Activated naive CD4-positive, alpha-beta T cell treated with anti-CD3 and anti-CD28 coated beads for 36 hours (primary cell): ENCODE measurements at regions of chr6 and their contacts with region 1.

Region 1: DNA sequence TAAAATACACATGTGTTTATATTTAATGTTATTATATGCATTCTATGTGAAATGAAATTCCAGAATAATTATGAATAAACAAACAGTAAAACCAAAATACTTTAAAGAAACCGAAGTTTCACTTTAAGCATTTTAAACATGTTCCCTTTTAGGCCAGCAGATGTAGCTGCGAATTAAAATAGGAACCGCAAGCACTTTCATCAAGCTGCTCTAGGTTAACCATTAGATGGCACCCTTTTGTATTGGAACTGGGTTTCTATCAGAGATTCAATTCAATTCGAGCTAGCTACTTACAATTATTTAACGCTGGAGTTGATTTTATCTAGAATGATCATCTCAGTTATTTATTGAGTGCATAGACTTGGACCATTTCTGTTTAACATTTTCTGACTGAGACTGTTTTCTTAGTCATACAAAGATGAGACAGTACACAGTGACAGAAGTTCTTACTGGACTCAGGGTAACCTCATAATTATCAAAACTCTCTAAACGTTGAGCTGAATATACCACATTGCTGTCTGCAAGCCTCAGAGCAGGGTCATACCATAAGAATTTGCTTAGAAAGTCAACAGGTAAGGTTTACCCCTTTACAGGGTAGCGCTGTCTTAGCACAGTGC is 8.5 kb downstream of the TMEM242 start:
- DNase-seq: peak; percentile 30
- H3K4me3 Mint-ChIP-seq: no peak overlapping the region
- H3K27ac Mint-ChIP-seq: no peak overlapping the region
- H3K4me1 Mint-ChIP-seq: peaks cover 12% of the 10 kb centered on the region
- H3K27me3 Mint-ChIP-seq: no peaks in the 10 kb centered on the region

Region 2: GRCh38 chr6:157339432-157339831 is 24.6 kb after region 1 on chr6:
- CTCF ChIA-PET with region 1: interaction called, 39 read pairs
- intact Hi-C with region 1: loop called (anchors 1 kb)
- DNase-seq: no peak
- H3K4me3 Mint-ChIP-seq: no peak overlapping the region
- H3K27ac Mint-ChIP-seq: no peak overlapping the region
- H3K4me1 Mint-ChIP-seq: no peaks in the 10 kb centered on the region
- H3K27me3 Mint-ChIP-seq: peaks cover 41% of the 10 kb centered on the region

Region 3: GRCh38 chr6:157597446-157598312 is 282.9 kb after region 1 on chr6:
- CTCF ChIA-PET with region 1: interaction called, 17 read pairs
- intact Hi-C with region 1: loop called (anchors 1 kb)
- DNase-seq: peak; percentile 69
- H3K4me3 Mint-ChIP-seq: no peak overlapping the region
- H3K27ac Mint-ChIP-seq: no peak overlapping the region
- H3K4me1 Mint-ChIP-seq: no peaks in the 10 kb centered on the region
- H3K27me3 Mint-ChIP-seq: no peaks in the 10 kb centered on the region

Region 4: DNA sequence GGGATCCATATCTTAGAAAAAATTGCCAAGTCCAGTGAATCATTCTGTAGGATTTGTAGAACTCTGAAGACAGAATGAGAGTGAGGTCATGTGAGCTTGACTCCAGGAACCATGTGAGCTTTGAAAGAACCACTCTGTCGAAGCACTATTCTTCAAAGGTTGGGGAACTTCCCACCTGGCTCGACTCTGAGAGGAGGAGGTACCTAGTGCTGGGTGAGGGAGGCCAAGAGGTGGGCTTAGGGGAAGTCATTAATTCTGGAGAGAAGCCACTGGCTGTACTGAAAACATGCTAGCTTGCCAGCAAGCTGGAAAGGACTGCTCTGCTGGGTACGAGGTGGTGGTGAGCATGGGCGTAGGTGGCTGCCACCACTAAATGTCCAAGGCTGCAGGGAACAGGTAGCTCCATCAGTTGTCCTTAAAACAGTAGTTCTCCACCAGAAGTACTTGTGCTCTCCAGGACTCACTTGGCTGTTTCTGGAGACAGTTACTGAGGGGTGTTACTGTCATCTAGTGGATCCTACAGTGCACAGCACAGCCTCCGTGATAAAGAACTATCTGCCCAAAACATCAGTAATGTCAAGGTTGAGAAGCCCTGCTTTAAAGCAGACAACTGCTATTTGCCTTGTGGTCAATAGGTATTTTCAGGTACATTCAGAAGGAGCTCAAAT is 632.2 kb after region 1 on chr6:
- CTCF ChIA-PET with region 1: no interaction called
- intact Hi-C with region 1: loop called (anchors 2 kb)
- DNase-seq: peak; percentile 57
- H3K4me3 Mint-ChIP-seq: no peak overlapping the region
- H3K27ac Mint-ChIP-seq: no peak overlapping the region
- H3K4me1 Mint-ChIP-seq: peaks cover 30% of the 10 kb centered on the region
- H3K27me3 Mint-ChIP-seq: no peaks in the 10 kb centered on the region

Region 5: GRCh38 chr6:158131926-158132325 is 817.1 kb after region 1 on chr6:
- CTCF ChIA-PET with region 1: no interaction called
- intact Hi-C with region 1: loop called (anchors 2 kb)
- DNase-seq: peak; percentile 33
- H3K4me3 Mint-ChIP-seq: no peak overlapping the region
- H3K27ac Mint-ChIP-seq: no peak overlapping the region
- H3K4me1 Mint-ChIP-seq: no peaks in the 10 kb centered on the region
- H3K27me3 Mint-ChIP-seq: no peaks in the 10 kb centered on the region